Activated CD4-positive, alpha-beta T cell treated with anti-CD3 and anti-CD28 coated beads for 36 hours (primary cell): ENCODE measurements at regions of chr7 and their contacts with region 1.

Region 1: DNA sequence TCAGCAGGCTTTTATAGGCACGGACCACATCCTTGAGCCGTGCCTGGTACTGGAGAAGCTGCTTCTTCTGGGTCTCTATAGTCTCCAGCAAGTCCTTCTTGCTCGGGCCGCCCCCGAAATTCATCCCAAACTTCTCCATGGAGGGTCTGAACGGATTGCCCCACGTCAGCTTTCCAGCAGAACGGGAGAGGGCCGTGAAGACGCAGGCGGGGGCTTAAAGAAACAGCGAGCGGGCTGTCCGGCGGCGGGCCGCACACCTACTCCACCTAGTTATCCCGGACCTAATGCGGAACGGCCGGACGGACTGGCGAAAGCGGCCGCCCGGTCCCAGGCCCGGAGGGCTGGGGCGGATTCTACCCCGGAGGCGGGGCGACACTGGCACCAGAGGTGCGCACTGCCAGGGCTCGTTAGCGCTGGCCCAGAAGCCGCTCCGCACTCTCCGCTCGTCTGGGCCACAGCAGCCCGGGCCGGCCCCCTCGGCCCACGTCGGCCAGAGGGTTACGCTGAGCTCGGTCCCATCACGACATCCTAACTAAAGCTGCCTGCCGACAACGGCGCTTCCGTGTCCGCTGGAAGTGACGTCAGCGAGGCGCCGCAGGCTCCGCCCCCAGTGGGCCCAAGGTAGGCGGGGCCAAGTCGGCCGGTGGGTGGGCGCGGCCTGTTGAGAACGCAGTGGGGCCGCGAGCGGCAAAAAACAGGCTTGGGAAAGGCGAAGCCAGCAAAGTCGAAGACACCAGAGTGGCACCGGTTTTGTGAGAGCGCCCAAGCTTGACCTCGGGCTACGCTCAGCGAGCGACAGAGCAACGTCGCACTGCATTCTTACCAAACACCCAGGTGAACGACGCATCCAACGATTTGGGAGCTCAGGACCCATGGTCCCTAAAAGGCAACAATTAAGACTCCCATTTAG is at the start of gene GCC1:
- DNase-seq: peak; percentile 96
- ATAC-seq: peak; percentile 84
- H3K4me3 Mint-ChIP-seq: peak within 1 kb of the TSS; percentile 88
- H3K27ac Mint-ChIP-seq: peak within 1 kb of the TSS; percentile 91
- H3K4me1 Mint-ChIP-seq: peaks cover 68% of the 10 kb centered on the region
- H3K27me3 Mint-ChIP-seq: no peaks in the 10 kb centered on the region
- total RNA-seq, gene GCC1: 11.5 to 13.9 TPM

Region 2: GRCh38 chr7:127392566-127393367 is 192.5 kb before region 1 on chr7 and contains the start of gene ZNF800:
- CTCF ChIA-PET with region 1: interaction called, 3 read pairs
- POLR2A ChIA-PET with region 1: interaction called, 3 read pairs
- intact Hi-C with region 1: loop called (anchors 1 to 10 kb)
- DNase-seq: peak; percentile 93
- ATAC-seq: peak; percentile 81
- H3K4me3 Mint-ChIP-seq: peak within 1 kb of the TSS; percentile 87
- H3K27ac Mint-ChIP-seq: peak within 1 kb of the TSS; percentile 96
- H3K4me1 Mint-ChIP-seq: peaks cover 62% of the 10 kb centered on the region
- H3K27me3 Mint-ChIP-seq: no peaks in the 10 kb centered on the region
- total RNA-seq, gene ZNF800: 27.5 to 34.7 TPM

Region 3: DNA sequence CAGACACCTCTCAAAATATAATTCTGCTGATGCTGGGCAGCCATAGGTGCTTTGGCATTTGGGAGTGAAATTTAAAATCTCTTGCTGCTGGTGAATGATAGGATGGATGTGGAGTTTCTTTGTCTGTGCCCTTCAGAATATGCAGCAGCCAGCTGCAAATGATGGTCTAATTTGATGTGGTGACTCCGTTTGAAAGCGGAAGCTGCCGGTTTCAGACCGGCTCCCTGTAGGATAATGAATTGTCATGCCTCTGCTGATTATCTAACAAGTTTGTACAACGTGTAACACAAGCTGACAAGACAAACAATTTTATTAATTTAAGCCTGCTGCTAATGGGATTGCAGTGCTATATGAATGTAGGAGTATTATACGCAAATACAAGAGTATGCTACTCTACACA is 170.2 kb after region 1 on chr7:
- CTCF ChIA-PET with region 1: no interaction called
- POLR2A ChIA-PET with region 1: no interaction called
- intact Hi-C with region 1: no loop called
- DNase-seq: no peak
- ATAC-seq: no peak
- H3K4me3 Mint-ChIP-seq: no peak overlapping the region
- H3K27ac Mint-ChIP-seq: no peak overlapping the region
- H3K4me1 Mint-ChIP-seq: peaks cover 37% of the 10 kb centered on the region
- H3K27me3 Mint-ChIP-seq: no peaks in the 10 kb centered on the region

Region 4: GRCh38 chr7:127850195-127850594 is 264.9 kb after region 1 on chr7:
- CTCF ChIA-PET with region 1: no interaction called
- POLR2A ChIA-PET with region 1: no interaction called
- intact Hi-C with region 1: loop called (anchors 5 kb)
- DNase-seq: peak; percentile 61
- ATAC-seq: peak; percentile 95
- H3K4me3 Mint-ChIP-seq: no peak overlapping the region
- H3K27ac Mint-ChIP-seq: peak overlapping the region; percentile 78
- H3K4me1 Mint-ChIP-seq: peaks cover 50% of the 10 kb centered on the region
- H3K27me3 Mint-ChIP-seq: no peaks in the 10 kb centered on the region

Region 5: GRCh38 chr7:128031901-128032604 is 446.8 kb after region 1 on chr7:
- CTCF ChIA-PET with region 1: no interaction called
- POLR2A ChIA-PET with region 1: no interaction called
- intact Hi-C with region 1: loop called in 1 of 2 experiments (anchors 5 kb)
- DNase-seq: peak; percentile 81
- ATAC-seq: peak; percentile 98
- H3K4me3 Mint-ChIP-seq: peak overlapping the region; percentile 64
- H3K27ac Mint-ChIP-seq: no peak overlapping the region
- H3K4me1 Mint-ChIP-seq: peaks cover 27% of the 10 kb centered on the region
- H3K27me3 Mint-ChIP-seq: no peaks in the 10 kb centered on the region

Region 6: DNA sequence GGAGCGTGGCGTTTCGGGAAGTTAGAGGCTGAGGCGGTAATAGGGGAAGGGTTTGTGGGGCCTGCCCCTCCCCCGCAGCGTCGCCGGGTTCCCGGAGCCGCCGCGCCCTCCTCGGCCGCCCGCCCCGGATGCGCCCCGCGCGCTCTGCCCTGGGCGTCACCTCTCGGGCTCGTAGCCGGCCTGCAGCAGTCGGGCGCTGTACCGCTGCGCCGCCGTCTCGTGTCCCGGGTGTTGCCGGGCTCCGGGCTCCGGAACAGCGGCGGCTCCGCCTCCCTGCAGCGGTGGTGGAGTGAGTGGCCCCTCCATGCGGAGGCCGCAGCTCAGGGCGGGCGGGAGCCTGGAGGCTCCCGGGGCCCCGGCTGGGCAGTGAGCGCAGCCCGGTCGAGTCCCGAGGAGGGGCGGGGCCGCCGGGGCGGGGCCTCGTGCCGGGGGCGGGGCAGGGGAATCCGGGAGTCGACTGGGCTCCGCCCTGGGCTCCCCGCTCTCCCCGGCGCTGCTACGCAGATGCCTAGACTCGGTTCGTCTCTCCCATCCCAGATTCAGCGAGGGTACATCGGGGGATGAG is 824.4 kb after region 1 on chr7 and contains the start of gene IMPDH1:
- CTCF ChIA-PET with region 1: no interaction called
- POLR2A ChIA-PET with region 1: no interaction called
- intact Hi-C with region 1: loop called in 1 of 2 experiments (anchors 5 kb)
- DNase-seq: peak; percentile 92
- ATAC-seq: peak; percentile 85
- H3K4me3 Mint-ChIP-seq: peak within 1 kb of the TSS; percentile 78
- H3K27ac Mint-ChIP-seq: peak within 1 kb of the TSS; percentile 78
- H3K4me1 Mint-ChIP-seq: peaks cover 27% of the 10 kb centered on the region
- H3K27me3 Mint-ChIP-seq: no peaks in the 10 kb centered on the region
- total RNA-seq, gene IMPDH1: 59.0 to 60.7 TPM

Region 7: DNA sequence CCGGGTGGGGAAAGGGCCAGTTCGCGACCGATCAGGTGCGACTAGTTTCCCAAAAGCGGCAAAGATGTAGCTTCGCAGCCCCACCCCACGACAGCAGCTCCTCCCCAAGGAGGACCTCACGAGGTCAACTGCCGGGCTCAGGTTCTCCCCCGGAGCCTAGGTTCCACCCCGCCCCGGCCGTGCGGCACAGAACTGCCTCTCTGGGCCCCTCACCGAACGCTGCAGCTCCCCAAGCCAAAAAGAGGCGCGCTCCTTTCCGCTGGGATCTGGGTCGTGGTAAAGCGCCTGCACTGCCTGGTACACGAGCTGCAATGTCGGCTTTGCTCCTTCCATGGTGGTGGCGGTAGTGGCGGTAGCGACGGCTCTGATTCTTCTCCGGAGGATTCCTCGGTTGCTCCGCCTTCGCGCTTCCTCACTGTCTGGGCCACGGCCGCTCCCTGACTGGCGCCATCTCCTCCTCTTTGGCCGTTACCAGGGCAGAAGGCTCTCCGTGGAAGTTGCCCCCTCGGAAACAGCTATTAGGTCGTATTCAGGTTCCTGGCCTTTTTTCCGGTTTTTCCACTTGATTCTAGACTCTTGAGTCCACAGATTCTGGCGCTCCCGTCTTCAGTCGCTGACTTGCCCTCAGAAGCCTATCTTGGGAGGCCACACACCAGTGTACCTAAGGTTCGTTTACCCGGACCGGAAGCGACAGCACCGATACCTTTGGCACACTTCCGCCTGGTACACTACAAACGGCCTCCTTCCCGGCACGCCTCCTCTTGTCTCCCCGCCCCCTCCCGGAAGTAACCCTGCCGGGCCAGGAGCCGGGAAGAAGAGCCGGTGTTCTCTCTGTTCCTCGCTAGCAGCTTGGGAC is 1469.4 kb after region 1 on chr7 and contains the start of gene TNPO3:
- CTCF ChIA-PET with region 1: no interaction called
- POLR2A ChIA-PET with region 1: no interaction called
- intact Hi-C with region 1: loop called in 1 of 2 experiments (anchors 10 kb)
- DNase-seq: peak; percentile 94
- ATAC-seq: peak; percentile 91
- H3K4me3 Mint-ChIP-seq: peak within 1 kb of the TSS; percentile 89
- H3K27ac Mint-ChIP-seq: peak within 1 kb of the TSS; percentile 99
- H3K4me1 Mint-ChIP-seq: peaks cover 28% of the 10 kb centered on the region
- H3K27me3 Mint-ChIP-seq: peaks cover 3% of the 10 kb centered on the region
- total RNA-seq, gene TNPO3: 57.7 to 60.5 TPM